ENCODE measurements at regions of chr11 and their contacts with region 1.

Region 1: GRCh38 chr11:120801801-120802689 is 221.9 kb upstream of the TBCEL start:
- DNase-seq: peak; percentile 58
- H3K4me3 ChIP-seq: no peak overlapping the region
- H3K27ac ChIP-seq: no peak overlapping the region
- H3K4me1 ChIP-seq: peaks cover 2% of the 10 kb centered on the region
- H3K27me3 ChIP-seq: no peaks in the 10 kb centered on the region
- CTCF ChIP-seq: peak; percentile 89 to 91
- POLR2A ChIP-seq: no peak

Region 2: GRCh38 chr11:120660024-120660565 is 141.9 kb before region 1 on chr11:
- CTCF ChIA-PET with region 1: interaction called, 14 read pairs
- POLR2A ChIA-PET with region 1: no interaction called
- dilution Hi-C with region 1: no loop called
- intact Hi-C with region 1: loop called (anchors 1 kb)
- DNase-seq: peak; percentile 19
- H3K4me3 ChIP-seq: no peak overlapping the region
- H3K27ac ChIP-seq: no peak overlapping the region
- H3K4me1 ChIP-seq: no peaks in the 10 kb centered on the region
- H3K27me3 ChIP-seq: peaks cover 0 to 7% of the 10 kb centered on the region in 2 experiments
- CTCF ChIP-seq: peak; percentile 44 to 63
- POLR2A ChIP-seq: no peak

Region 3: GRCh38 chr11:120710354-120711131 is 91.5 kb before region 1 on chr11:
- CTCF ChIA-PET with region 1: interaction called, 23 read pairs
- POLR2A ChIA-PET with region 1: no interaction called
- dilution Hi-C with region 1: no loop called
- intact Hi-C with region 1: loop called (anchors 2 kb)
- DNase-seq: no peak
- H3K4me3 ChIP-seq: no peak overlapping the region
- H3K27ac ChIP-seq: no peak overlapping the region
- H3K4me1 ChIP-seq: peaks cover 8% of the 10 kb centered on the region
- H3K27me3 ChIP-seq: no peaks in the 10 kb centered on the region
- CTCF ChIP-seq: no peak
- POLR2A ChIP-seq: no peak

Region 4: GRCh38 chr11:120723751-120724150 is 78.3 kb before region 1 on chr11:
- CTCF ChIA-PET with region 1: no interaction called
- POLR2A ChIA-PET with region 1: no interaction called
- dilution Hi-C with region 1: no loop called
- intact Hi-C with region 1: no loop called
- DNase-seq: no peak
- H3K4me3 ChIP-seq: no peak overlapping the region
- H3K27ac ChIP-seq: no peak overlapping the region
- H3K4me1 ChIP-seq: no peaks in the 10 kb centered on the region
- H3K27me3 ChIP-seq: peaks cover 2 to 5% of the 10 kb centered on the region in 2 experiments
- CTCF ChIP-seq: no peak
- POLR2A ChIP-seq: no peak

Region 5: GRCh38 chr11:120735035-120735434 is 67.0 kb before region 1 on chr11:
- CTCF ChIA-PET with region 1: no interaction called
- POLR2A ChIA-PET with region 1: no interaction called
- dilution Hi-C with region 1: no loop called
- intact Hi-C with region 1: no loop called
- DNase-seq: no peak
- H3K4me3 ChIP-seq: no peak overlapping the region
- H3K27ac ChIP-seq: no peak overlapping the region
- H3K4me1 ChIP-seq: no peaks in the 10 kb centered on the region
- H3K27me3 ChIP-seq: no peaks in the 10 kb centered on the region
- CTCF ChIP-seq: no peak
- POLR2A ChIP-seq: no peak

Region 6: DNA sequence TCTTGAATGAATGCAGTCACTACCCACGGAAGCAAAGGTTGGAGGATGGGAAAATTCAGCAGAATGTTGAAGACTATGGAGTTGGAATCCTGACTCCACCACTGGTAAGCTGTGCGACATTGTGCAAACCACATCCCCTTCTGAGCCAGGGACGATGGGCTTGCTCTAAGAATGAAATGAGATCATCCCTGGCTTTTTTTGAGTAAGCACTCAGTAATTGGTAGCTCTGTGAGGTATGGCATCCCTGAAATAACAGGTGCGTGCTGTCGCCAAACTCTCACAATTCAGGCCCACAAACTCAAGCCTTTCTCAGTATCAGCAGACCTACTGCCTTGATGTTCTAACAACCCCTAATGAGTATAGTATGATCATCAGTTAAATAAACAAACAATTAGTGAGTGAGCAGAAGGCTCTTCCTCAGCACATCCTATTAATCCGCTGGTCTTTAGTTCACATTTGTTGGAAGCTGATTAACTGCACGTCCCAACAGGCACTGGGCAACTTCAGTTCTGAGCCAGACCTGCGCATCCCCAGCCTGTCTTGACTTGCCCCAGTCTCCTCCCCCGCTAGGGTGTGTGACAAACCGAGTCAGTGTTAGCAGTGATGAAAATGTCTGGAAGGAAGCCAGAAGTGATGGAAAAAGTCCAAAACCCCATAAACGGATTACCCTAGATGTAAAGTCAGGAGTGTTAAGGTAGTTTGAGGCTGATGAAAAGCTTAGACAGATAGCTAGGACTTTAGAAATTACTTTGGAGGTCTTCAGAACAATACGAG is 55.0 kb before region 1 on chr11:
- CTCF ChIA-PET with region 1: interaction called, 15 read pairs
- POLR2A ChIA-PET with region 1: no interaction called
- dilution Hi-C with region 1: no loop called
- intact Hi-C with region 1: no loop called
- DNase-seq: no peak
- H3K4me3 ChIP-seq: no peak overlapping the region
- H3K27ac ChIP-seq: no peak overlapping the region
- H3K4me1 ChIP-seq: no peaks in the 10 kb centered on the region
- H3K27me3 ChIP-seq: no peaks in the 10 kb centered on the region
- CTCF ChIP-seq: no peak
- POLR2A ChIP-seq: no peak

Region 7: DNA sequence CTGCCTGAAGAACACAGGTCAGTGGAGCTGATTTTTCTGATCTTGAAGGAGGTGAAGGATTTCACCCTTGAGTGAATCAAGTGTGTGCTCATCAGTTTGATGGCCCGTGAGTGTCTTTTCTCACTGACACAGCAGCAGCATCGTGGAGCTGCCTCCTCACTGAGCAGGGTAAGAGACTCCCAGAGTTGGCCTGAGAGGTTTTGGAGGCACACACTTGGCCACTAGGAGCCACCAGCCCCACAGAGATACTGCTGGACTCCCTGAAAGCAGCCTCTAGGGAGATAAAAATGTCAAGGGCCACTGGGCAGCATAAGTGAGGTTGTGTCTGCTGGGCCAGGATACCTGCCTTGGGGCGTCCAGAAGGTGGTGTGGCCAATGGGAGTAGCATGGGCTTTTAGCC is 45.1 kb before region 1 on chr11:
- CTCF ChIA-PET with region 1: interaction called, 9 read pairs
- POLR2A ChIA-PET with region 1: no interaction called
- dilution Hi-C with region 1: no loop called
- intact Hi-C with region 1: loop called (anchors 1 kb)
- DNase-seq: peak; percentile 6
- H3K4me3 ChIP-seq: no peak overlapping the region
- H3K27ac ChIP-seq: no peak overlapping the region
- H3K4me1 ChIP-seq: no peaks in the 10 kb centered on the region
- H3K27me3 ChIP-seq: no peaks in the 10 kb centered on the region
- CTCF ChIP-seq: peak in 1 of 2 donors; percentile 23
- POLR2A ChIP-seq: no peak

Region 8: GRCh38 chr11:120784566-120785251 is 17.3 kb before region 1 on chr11:
- CTCF ChIA-PET with region 1: interaction called, 12 read pairs
- POLR2A ChIA-PET with region 1: no interaction called
- dilution Hi-C with region 1: no loop called
- intact Hi-C with region 1: loop called (anchors 2 kb)
- DNase-seq: no peak
- H3K4me3 ChIP-seq: no peak overlapping the region
- H3K27ac ChIP-seq: no peak overlapping the region
- H3K4me1 ChIP-seq: peaks cover 13% of the 10 kb centered on the region
- H3K27me3 ChIP-seq: peaks cover 2 to 5% of the 10 kb centered on the region in 2 experiments
- CTCF ChIP-seq: no peak
- POLR2A ChIP-seq: no peak

Region 9: DNA sequence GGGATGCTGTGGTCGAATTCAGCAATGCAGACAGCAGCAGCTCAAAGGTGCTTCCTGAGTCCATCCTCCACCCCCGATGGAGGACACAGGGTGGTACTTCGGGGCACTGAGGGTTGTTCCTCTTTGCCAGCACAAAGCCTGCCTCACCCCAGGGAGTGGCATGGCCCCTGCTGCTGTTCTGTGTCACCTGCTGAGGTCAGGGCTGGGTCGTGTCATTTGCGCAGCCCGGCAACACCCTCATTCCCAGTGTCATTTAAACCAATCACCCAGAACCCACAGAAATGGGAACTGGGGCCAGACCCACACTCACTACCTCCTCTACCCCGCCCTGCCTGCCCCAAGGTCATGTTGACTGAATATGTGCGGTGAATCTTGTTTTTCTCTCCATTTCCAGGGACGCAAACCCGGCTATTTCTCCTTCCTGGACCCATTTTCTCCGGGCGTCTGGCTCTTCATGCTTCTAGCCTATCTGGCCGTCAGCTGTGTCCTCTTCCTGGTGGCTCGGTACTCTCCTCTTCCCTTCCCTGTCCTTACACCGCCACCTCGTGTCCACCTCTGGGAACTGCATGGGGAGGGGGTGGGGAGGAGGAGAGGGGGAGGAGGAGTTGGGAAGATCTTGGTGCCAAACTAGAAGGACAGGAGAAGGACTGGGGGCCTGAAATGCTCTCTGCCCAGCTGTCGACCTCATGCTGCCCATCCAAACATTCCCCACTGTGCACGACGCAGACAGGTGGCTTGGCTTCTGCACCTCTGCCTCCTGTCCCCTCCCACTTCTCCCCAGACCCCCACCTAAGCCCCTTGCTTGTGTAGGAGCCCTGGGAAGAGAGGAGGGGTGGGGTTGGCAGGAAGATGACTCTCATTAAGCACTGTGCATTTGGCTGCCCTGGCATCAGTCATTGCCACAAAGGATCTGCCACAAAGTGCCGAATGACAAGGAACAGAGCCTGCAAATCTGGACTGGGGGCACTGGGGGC is 150.7 kb after region 1 on chr11:
- CTCF ChIA-PET with region 1: no interaction called
- POLR2A ChIA-PET with region 1: no interaction called
- dilution Hi-C with region 1: no loop called
- intact Hi-C with region 1: loop called (anchors 10 kb)
- DNase-seq: peak; percentile 65
- H3K4me3 ChIP-seq: no peak overlapping the region
- H3K27ac ChIP-seq: no peak overlapping the region
- H3K4me1 ChIP-seq: no peaks in the 10 kb centered on the region
- H3K27me3 ChIP-seq: no peaks in the 10 kb centered on the region
- CTCF ChIP-seq: peak; percentile 39 to 77
- POLR2A ChIP-seq: no peak